ENCODE measurements at regions of chr2 and their contacts with region 1.

Region 1: DNA sequence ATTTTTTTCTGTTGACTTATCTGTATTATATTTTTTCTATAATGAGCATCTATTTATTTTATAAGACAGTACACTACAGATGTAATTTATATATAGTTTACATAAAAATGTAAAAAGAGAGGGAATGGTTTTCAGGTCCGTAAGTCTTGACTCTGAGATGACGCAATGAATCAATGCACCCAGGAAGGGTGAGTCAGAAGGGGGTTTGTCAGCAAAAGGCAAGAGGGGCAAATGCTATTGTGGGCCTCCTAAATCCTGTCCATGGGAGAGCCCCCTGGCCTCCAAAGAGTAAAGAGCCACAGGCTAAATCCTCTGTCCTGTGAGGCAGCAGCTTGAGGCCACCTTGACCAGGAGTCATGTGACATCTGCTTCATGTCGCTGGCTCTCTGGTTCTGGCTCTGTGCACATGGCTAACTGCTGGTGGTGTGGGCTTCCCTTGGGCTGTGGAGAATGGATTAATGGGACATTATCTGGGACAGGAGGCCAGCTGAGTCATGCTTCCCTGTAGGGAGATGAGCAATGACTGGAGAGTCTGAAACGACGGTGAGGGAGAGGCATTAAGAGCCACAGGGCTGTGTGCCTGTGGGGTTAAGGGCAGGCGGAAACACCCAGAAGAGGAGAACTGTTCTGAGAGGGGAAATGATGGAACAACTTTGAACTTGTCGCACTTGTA is 22.8 kb upstream of the ASB18 start:
- DNase-seq: peak; percentile 85
- ATAC-seq: peak; percentile 91
- H3K4me3 ChIP-seq: no peak overlapping the region
- H3K27ac ChIP-seq: peak overlapping the region; percentile 98
- H3K4me1 ChIP-seq: peaks cover 30% of the 10 kb centered on the region
- H3K27me3 ChIP-seq: no peaks in the 10 kb centered on the region
- CTCF ChIP-seq: no peak

Region 2: DNA sequence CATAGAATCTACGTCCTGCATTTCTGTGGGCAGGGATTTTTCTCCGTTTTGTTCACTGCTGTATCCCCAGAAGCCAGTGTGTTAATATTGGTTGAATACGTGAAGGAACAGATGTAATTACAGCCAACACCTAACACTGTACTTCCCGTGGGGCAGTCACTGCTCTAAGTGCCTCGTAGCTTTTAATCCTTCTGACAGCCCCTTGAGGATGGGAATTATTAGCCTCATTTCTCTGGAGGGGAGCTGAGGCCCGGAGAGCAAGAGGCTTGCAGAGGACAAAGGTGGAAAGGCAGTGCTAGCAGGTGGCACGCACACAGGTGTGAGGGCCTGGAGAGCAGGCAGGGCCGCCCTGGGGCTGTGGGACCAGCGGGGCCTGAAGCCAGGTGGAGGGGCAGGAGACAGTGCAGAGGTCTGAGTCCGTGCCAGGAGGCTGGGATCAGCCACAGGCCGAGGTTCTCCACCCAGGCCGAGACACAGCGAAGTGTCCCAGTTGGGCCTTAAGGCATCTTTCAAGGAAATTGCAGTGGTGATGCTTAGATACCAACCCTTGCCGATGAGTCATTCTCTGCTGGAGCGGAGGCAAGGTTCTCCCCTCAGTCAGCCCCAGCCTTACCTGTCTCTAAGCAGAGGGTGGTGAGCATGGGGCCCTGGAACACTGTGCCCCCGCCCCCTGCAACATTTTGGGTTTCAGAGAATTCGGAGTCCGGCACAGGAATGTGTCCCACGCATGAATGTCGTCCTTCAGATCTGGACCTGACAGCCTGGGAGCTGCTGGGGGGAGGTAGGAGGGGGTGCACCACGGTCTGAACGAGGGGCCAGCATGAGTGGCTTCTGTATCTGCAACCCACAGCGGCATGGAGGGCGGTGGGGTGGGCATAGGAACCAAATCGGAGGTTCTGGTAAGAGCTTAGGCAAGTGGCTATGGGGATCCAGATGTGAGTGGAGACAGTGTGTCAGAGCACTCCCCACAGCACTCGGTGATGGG is 241.5 kb before region 1 on chr2:
- CTCF ChIA-PET with region 1: no interaction called
- POLR2A ChIA-PET with region 1: no interaction called
- intact Hi-C with region 1: no loop called
- DNase-seq: peak; percentile 83
- ATAC-seq: peak; percentile 75
- H3K4me3 ChIP-seq: no peak overlapping the region
- H3K27ac ChIP-seq: peak overlapping the region; percentile 74
- H3K4me1 ChIP-seq: peaks cover 30% of the 10 kb centered on the region
- H3K27me3 ChIP-seq: no peaks in the 10 kb centered on the region
- CTCF ChIP-seq: no peak

Region 3: GRCh38 chr2:236221798-236222197 is 65.2 kb before region 1 on chr2:
- CTCF ChIA-PET with region 1: no interaction called
- POLR2A ChIA-PET with region 1: no interaction called
- intact Hi-C with region 1: loop called (anchors 10 kb)
- DNase-seq: no peak
- ATAC-seq: no peak
- H3K4me3 ChIP-seq: no peak overlapping the region
- H3K27ac ChIP-seq: no peak overlapping the region
- H3K4me1 ChIP-seq: no peaks in the 10 kb centered on the region
- H3K27me3 ChIP-seq: no peaks in the 10 kb centered on the region
- CTCF ChIP-seq: no peak

Region 4: DNA sequence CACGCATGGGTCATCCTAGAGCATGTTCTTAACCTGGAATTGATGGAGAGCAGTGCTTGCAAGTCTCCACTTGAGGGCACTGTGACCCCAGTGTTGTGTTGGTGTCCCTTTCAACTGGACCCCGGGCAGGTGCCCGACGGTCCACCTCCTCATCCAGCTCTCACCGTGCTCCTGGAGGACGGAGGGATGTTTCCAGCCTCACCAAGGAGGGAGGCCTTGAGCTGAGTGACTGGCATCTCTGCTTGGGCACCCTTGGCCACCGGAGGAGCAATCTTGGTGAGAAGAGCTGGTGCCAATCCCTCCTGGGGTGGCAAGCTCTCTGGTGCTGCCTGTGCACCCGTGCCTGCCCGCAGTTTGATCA is 22.6 kb after region 1 on chr2:
- CTCF ChIA-PET with region 1: interaction called, 3 read pairs
- POLR2A ChIA-PET with region 1: interaction called, 3 read pairs
- intact Hi-C with region 1: loop called (anchors 1 kb)
- DNase-seq: no peak
- ATAC-seq: peak; percentile 82
- H3K4me3 ChIP-seq: no peak overlapping the region
- H3K27ac ChIP-seq: peak overlapping the region; percentile 63
- H3K4me1 ChIP-seq: peaks cover 8% of the 10 kb centered on the region
- H3K27me3 ChIP-seq: no peaks in the 10 kb centered on the region
- CTCF ChIP-seq: peak; percentile 82